H1 (cell line): ENCODE measurements at regions of chr20 and their contacts with region 1.

Region 1: DNA sequence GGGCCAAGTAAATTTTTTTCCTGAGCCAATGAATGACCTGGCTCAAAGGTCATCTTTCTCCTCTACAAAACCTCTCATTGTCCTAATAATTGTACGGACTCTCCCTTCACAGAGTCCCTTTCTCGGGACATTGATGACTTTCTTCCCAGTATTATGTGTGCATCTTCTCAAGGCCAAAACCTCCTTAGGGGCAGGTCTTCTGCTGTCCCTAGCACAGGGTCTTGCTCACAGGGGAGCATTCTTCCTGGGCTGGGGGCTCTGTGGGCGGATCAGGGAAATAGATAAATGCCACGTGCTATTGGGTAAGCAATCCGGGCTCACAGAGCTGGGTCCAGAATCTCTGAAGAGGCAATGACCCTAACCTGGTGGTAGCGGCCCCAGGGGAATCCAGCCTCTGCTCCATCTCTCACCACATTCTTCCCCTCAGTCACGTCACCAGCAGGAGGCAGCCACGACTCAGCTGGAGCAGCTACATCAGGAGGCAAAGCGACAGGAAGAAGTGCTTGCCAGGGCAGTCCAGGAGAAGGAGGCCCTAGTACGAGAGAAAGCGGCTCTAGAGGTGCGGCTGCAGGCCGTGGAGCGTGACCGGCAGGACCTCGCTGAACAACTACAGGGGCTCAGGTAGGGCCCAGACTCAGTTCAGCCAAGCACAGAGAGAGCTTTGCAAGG is 23.5 kb downstream of the CEP250 start:
- DNase-seq: peak in 1 of 2 experiments; percentile 54
- H3K4me3 ChIP-seq: no peak overlapping the region
- H3K27ac ChIP-seq: no peak overlapping the region
- H3K4me1 ChIP-seq: no peaks in the 10 kb centered on the region
- H3K27me3 ChIP-seq: no peaks in the 10 kb centered on the region
- CTCF ChIP-seq: peak; percentile 39 to 65 (median 58); a peak in 3 of 4 replicates
- EP300 ChIP-seq: no peak
- POLR2A ChIP-seq: no peak
- RAD21 ChIP-seq: peak; percentile 54 to 60

Region 2: DNA sequence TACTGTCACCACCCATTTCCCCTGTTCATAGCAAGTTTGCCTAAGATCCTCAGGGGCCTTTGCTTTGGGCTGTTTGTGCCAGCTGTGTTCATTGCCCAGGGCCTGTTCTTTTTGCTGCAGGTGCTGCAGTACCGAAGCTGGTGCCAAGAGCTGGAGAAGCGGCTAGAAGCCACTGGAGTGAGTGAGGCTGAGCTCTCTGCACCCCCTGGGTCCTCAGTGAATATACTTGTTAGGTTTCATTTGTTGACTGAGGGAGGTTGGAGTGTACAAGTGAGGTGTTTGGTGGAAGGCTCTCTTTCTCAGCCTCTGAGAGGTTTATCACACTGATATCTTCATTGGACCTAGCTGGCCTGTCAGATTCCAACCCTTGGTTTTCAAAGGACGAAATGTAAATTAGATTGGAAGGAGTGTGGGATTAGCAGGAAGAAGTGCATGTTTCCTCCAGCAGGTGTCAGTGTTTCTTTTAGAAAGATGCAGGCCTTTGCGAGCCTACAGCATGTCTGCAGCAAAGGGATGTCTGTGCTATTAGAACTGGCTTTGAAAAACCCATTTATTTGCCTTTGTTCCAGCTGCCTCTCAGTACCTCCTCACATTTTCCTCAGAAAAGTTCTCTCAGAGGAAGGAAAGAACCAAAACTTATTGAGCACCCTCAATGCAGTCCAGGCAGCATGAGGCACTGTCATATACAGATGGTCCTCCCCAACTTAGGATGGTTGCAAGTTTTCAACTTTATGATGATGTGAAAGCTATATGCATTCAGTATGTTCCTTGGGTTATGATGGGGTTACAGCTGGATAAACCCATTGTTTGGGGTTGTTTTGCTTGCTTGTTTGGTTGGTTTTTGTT is 15.3 kb before region 1 on chr20:
- CTCF ChIA-PET with region 1: interaction called, 23 read pairs
- POLR2A ChIA-PET with region 1: interaction called, 3 read pairs
- DNase-seq: peak in 1 of 2 experiments; percentile 81
- H3K4me3 ChIP-seq: no peak overlapping the region
- H3K27ac ChIP-seq: no peak overlapping the region
- H3K4me1 ChIP-seq: no peaks in the 10 kb centered on the region
- H3K27me3 ChIP-seq: no peaks in the 10 kb centered on the region
- CTCF ChIP-seq: peak in 2 of 3 experiments; percentile 64 to 89; a peak in 3 of 4 replicates
- EP300 ChIP-seq: no peak
- POLR2A ChIP-seq: no peak
- RAD21 ChIP-seq: peak; percentile 66 to 70

Region 3: GRCh38 chr20:35490736-35491181 is 11.8 kb after region 1 on chr20:
- CTCF ChIA-PET with region 1: interaction called, 10 read pairs
- POLR2A ChIA-PET with region 1: interaction called, 4 read pairs
- DNase-seq: no peak
- H3K4me3 ChIP-seq: no peak overlapping the region
- H3K27ac ChIP-seq: no peak overlapping the region
- H3K4me1 ChIP-seq: no peaks in the 10 kb centered on the region
- H3K27me3 ChIP-seq: no peaks in the 10 kb centered on the region
- CTCF ChIP-seq: no peak
- EP300 ChIP-seq: no peak
- POLR2A ChIP-seq: no peak
- RAD21 ChIP-seq: no peak

Region 4: DNA sequence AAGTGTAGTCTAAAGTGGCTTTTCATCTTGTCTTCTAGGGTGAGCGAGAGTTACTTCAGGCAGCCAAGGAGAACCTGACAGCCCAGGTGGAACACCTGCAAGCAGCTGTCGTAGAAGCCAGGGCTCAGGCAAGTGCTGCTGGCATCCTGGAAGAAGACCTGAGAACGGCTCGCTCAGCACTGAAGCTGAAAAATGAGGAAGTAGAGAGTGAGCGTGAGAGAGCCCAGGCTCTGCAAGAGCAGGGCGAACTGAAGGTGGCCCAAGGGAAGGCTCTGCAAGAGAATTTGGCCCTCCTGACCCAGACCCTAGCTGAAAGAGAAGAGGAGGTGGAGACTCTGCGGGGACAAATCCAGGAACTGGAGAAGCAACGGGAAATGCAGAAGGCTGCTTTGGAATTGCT is 23.4 kb after region 1 on chr20:
- CTCF ChIA-PET with region 1: interaction called, 10 read pairs
- POLR2A ChIA-PET with region 1: interaction called, 3 read pairs
- DNase-seq: no peak
- H3K4me3 ChIP-seq: no peak overlapping the region
- H3K27ac ChIP-seq: no peak overlapping the region
- H3K4me1 ChIP-seq: no peaks in the 10 kb centered on the region
- H3K27me3 ChIP-seq: no peaks in the 10 kb centered on the region
- CTCF ChIP-seq: no peak
- EP300 ChIP-seq: no peak
- POLR2A ChIP-seq: no peak
- RAD21 ChIP-seq: no peak